Right ventricle myocardium superior (tissue), 1 donor: ENCODE measurements at regions of chr7 and their contacts with region 1.

Region 1: DNA sequence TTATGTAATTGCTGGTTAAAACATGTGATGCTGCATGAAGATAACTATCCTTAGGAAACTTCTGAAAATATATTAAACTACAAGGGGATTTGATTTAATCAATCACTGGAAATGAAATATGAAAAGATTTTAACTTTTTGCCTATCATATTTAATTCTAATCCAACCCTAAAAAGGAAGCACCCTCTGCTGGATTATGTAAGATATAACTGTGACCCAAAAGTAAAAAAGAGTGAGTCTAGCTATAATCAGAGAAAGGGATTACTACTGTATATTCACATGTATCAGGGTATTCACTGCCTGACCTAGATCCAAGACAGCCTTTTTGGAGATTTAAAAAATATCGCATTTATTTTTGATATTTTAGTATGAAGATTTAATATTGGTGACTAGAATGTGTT is 295.5 kb downstream of the MDFIC start:
- DNase-seq: no peak
- ATAC-seq: no peak

Region 2: DNA sequence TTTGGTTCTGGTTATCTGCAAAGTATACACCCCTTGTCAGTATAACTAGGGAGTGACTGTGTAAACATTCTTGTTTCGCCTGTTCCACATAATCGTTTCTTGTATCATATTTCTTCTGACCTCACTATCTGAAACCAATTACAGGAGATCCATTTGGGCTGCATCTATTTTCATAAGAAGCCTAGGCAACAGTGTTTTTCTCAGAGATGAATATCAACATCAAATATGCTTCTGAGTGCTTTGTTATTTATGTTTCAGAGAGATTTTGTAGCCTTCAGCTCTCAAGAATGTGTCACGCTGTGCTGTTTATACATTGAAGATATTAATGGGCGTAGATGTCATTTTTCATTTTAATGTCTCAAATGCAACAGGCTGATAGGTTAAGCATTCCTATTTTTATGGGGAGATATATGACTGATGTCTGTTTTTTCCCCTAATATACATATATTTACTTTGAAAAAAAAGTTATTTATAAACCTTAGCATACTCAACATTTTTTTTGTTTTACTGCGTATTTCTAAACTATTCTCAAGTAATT is 687.2 kb before region 1 on chr7:
- intact Hi-C with region 1: no loop called
- DNase-seq: no peak
- ATAC-seq: no peak

Region 3: DNA sequence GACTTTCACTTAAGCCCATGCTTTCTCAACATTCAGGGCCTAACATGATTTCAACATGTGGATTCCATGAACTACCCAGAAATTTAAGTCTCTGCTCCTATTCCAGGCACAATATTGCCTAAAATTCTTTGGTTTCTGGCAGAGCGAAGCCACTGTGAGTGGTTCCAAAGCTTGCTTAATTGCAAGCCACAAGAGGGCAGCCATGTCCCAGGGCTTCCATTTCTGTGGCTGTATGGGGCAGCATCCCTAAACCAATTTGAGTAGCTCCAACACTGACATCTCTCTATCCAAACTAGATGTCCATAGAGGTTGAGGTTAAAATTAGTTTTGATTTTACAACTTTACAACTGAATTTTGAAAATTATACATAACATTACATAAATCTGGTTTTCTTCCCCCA is 351.8 kb before region 1 on chr7:
- intact Hi-C with region 1: loop called (anchors 10 kb)
- DNase-seq: peak; percentile 60
- ATAC-seq: peak; percentile 83

Region 4: GRCh38 chr7:115328018-115328417 is 110.6 kb after region 1 on chr7:
- intact Hi-C with region 1: no loop called
- DNase-seq: no peak
- ATAC-seq: no peak